Activated T-helper 2 cell treated with anti-CD3 and anti-CD28 coated beads, Interferon-gamma antibody, Interleukin-2, Interleukin-4, amounts not matched to agents 10 μg/mL and 5 μg/mL and 100 μg/mL, durations not matched to agents 14 hours and 24 hours and 36 hours (primary cell): ENCODE measurements at regions of chr6 and their contacts with region 1.

Region 1: GRCh38 chr6:90179190-90180169 is 117.2 kb downstream of the BACH2 start:
- DNase-seq: no peak
- H3K4me3 Mint-ChIP-seq: no peak overlapping the region
- H3K27ac Mint-ChIP-seq: no peak overlapping the region
- H3K4me1 Mint-ChIP-seq: peaks cover 67% of the 10 kb centered on the region
- H3K27me3 Mint-ChIP-seq: no peaks in the 10 kb centered on the region

Region 2: DNA sequence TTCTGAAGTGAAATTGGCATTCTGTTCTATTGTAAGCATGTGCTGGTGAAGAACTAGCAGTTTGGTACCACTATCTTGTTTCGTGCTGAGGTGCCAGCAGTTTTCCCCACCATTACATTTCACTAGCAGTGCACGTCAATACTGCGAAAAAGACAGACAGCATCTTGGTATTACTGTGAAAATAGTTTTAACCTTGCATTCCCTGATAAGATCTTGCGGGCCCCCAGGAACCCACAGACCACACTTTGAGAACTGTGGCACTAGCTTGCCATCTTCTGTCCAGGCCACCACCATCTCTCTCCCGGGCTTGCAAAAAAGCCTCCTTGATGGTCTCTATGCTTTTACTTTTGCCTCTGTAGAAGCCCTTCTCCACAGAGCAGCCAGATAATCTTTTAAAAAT is 68.5 kb before region 1 on chr6:
- intact Hi-C with region 1: loop called (anchors 1 kb)
- DNase-seq: peak; percentile 76
- H3K4me3 Mint-ChIP-seq: peak overlapping the region; percentile 0
- H3K27ac Mint-ChIP-seq: peak overlapping the region; percentile 68
- H3K4me1 Mint-ChIP-seq: peaks cover 69% of the 10 kb centered on the region
- H3K27me3 Mint-ChIP-seq: no peaks in the 10 kb centered on the region

Region 3: DNA sequence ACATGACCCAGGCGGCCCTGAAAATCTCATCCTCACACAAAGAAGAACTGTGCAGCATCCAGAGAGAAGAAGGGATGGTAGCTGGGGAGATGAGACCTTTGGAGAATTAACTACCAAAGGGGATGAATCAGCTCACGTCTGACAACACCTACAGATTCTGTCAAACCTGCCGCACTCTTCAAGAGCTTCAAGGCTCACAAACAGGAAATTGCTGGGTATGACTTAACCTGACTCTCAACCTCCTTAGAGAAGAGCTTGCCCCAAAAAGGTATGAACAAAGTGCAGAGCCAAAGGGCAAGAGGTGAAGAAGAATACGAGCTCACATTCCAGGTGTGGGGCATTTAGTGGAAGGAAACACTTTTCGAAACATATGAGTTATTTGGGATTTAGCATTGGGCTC is 22.6 kb before region 1 on chr6:
- intact Hi-C with region 1: loop called (anchors 2 kb)
- DNase-seq: no peak
- H3K4me3 Mint-ChIP-seq: peak overlapping the region; percentile 3
- H3K27ac Mint-ChIP-seq: peak overlapping the region; percentile 65
- H3K4me1 Mint-ChIP-seq: peaks cover 62% of the 10 kb centered on the region
- H3K27me3 Mint-ChIP-seq: no peaks in the 10 kb centered on the region

Region 4: DNA sequence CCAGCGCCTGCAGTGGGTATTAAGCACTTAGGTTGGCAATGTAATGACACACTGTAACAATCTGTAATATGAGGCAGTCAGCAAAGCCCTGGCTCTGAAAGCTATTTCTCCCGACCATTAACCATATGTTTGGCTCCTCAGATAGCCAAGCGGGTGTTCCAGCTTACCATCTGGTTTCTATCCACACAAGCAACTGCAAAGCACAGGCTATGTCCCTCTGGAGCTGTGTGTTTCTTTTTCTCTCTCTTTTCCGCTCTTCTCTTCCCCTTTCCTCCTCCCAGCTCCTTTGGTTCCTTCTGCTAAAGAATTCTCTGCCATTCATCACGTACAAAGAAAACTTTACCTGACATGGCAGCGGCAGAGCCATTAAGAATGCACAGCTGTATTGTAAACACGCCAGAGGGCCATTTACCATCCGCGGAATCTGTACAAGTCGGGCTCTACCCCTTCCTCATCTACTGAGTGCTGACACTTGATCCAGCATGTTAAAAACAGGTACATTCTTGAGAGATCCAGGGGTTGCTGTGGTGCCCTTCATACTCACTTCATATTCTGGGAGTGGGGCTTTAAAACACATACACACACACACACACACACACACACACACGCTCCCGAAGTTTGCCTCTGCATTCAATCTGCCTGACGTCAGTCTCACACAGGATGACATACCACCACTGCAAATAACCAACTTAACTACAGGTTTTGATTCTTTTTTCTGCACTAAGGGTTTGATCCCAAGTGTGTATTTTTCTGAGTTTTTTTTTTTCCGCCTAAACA is 39.9 kb after region 1 on chr6:
- intact Hi-C with region 1: loop called (anchors 1 kb)
- DNase-seq: no peak
- H3K4me3 Mint-ChIP-seq: no peak overlapping the region
- H3K27ac Mint-ChIP-seq: no peak overlapping the region
- H3K4me1 Mint-ChIP-seq: peaks cover 25% of the 10 kb centered on the region
- H3K27me3 Mint-ChIP-seq: no peaks in the 10 kb centered on the region

Region 5: GRCh38 chr6:90251295-90251992 is 72.0 kb after region 1 on chr6:
- intact Hi-C with region 1: loop called (anchors 2 kb)
- DNase-seq: no peak
- H3K4me3 Mint-ChIP-seq: peak overlapping the region; percentile 48
- H3K27ac Mint-ChIP-seq: peak overlapping the region; percentile 83
- H3K4me1 Mint-ChIP-seq: peaks cover 71% of the 10 kb centered on the region
- H3K27me3 Mint-ChIP-seq: no peaks in the 10 kb centered on the region